Posterior vena cava (tissue), 2 donors: ENCODE measurements at regions of chr5 and their contacts with region 1.

Region 1: DNA sequence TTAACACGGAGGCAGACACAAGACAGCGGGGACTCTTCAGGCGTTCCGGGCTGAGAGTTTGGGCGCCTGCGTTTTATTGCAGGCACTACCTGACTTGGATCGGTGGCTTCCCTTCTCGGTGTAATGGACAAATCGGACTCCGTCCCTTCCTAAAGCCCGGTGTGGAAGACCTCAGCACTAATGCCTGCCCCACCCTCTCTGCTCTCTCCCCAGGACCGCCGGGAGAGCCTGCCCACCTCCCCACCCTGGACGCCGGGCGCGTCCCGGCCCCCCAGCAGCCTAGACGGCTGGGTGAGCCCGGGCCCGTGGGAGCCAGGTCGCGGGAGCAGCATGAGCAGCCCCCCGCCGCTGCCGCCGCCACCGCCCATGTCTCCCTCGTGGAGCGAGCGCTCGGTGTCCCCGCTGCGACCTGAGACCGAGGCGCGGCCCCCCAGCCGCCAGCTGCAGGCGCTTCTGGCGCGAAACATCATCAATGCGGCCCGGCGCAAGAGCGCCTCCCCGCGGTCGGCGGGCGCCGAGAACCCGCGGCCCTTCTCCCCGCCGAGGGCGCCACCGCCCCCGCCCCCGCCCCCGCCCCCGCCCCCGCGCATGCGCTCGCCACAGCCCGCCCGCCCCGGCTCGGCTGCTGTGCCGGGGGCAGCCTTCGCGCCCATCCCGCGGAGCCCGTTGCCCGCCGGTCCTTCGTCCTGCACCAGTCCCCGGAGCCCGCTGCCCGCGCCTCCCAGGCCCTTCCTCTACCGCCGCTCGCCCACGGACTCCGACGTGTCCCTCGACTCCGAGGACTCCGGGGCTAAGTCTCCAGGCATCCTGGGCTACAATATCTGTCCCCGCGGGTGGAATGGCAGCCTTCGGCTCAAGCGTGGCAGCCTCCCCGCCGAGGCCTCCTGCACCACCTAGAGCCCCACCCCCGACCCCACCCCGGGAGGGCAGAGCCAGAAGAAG is 4.6 kb upstream of the MYOZ3 start:
- DNase-seq: peak; percentile 92

Region 2: GRCh38 chr5:149667084-149667828 is 989.2 kb before region 1 on chr5:
- intact Hi-C with region 1: loop called in 1 of 2 experiments (anchors 5 kb)
- DNase-seq: no peak

Region 3: DNA sequence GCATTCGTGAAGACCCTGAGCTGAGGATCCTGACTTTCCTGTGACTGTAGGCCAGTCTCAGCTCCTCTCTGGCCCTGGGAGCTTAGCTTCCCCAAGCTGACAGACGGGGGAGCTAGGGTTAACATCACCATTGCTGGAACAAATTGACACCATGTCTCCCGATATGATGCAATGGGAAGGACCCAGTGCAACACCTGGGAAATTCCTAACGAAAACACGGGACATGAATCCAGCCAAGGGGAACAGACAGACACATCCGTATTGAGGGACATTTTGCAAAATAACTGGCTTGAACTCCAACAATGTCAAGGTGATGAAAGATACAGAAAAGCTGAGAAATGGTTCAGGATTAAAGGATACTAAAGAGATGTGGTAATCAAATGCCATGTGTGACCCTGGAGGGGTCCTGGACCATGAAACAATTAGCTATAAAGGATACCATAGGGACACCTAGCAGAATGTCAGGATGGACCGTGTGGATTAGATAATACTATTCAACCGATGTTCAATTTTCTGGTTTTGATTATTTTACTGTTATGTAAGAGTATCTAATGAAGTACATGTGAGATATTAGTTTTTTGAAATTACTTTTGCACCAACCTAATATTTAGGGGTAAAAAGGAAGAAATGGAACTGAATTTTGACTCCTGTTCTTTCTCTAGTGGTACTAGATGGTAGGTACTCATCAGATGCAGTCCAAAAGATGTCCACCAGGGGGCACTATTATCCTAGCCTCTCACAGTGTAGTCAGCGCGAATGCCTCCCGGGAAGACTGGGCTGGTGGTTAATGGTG is 95.9 kb before region 1 on chr5:
- intact Hi-C with region 1: loop called in 1 of 2 experiments (anchors 5 kb)
- DNase-seq: no peak

Region 4: DNA sequence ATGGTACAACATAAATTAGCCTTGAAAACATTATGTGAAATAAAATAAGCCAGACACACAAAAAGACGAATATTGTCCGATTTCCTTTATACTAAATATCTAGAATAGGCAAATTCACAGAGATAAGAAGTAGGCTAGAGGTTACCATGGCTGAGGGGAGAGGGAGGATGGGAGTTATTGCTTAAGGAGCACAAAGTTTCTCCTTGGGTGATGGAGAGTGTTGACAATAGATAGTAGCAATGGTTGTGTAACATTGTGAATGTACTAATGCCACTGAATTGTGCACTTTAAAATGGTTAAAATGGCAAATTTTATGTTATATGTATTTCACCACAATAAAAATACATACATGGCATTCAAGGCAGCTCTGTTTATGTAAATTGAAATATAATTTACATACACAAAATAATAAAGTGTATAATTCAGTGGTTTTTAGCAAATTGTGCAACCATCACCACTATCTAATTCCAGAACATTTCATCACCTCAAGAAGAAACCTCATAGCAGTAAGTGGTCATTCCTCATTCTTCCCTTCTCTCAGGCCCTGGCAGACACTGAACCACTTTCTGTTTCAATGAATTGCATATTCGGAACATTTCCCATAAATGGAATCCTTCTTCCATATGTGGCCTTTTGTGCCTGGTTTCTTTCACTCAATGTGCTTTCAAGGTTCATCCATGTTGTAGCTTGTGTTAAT is 89.3 kb before region 1 on chr5:
- intact Hi-C with region 1: loop called (anchors 2 to 5 kb)
- DNase-seq: no peak

Region 5: DNA sequence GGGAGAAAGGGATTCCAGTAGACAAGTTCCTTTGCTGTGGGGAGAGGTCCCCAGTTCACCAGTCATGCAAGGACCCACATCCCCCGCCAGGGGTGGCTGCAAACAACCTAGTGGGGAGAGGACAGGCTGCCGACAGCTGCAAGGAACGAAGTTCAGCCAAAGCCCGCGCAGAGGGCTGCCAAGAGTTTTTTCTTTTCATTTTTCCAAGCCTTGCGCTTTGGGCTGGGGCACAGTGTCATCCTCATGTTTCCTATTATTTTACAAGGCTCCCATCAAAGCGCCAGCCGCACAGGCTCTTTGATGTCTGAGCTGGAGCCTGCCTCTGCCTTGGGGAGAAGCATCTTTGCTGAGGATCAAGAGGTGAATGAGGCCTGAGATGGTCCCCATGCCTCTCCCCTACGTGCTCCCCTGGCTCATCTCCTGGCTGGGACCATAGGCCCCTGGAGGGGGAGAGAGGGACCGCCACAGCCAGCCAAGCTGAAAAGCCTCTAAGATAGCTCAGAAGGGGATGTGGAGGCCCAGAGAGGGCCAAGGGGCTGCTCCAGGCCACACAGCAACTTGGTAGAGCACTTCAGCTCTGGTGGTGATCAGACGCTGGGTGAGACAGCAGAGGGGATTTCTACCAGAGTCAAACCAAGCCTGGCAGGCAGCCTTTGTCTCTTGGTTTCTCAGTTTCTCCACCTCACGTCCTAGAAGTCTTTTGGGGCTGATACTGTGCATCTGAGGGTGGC is 66.4 kb before region 1 on chr5:
- intact Hi-C with region 1: loop called (anchors 5 kb)
- DNase-seq: peak; percentile 92